Mammary epithelial cell (primary cell): ENCODE measurements at regions of chr9 and their contacts with region 1.

Region 1: GRCh38 chr9:86983260-86984255 is 36.3 kb upstream of the GAS1 start:
- DNase-seq: peak; percentile 98
- H3K4me3 ChIP-seq: no peak overlapping the region
- H3K27ac ChIP-seq: peak overlapping the region; percentile 95
- H3K4me1 ChIP-seq: peaks cover 47% of the 10 kb centered on the region
- H3K27me3 ChIP-seq: no peaks in the 10 kb centered on the region
- CTCF ChIP-seq: no peak

Region 2: DNA sequence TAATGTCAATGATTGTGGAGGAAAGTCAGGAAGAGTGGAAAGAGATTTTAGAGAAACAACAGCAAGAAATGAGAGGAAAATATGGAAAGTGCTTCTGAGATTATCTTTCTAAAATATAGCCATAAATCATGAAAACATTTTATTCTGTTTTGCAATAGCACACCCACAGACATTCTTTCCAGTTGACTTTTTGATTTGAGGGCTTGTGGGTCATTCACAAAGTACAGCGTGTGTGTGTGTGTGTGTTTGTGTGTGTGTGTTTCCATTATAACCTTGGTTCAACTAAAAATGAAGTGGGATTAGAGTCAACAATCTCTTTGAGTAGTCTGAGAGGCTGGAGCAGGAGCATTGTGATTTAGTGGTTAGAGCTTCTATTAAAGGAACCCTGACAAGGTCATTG is 80.3 kb after region 1 on chr9:
- CTCF ChIA-PET with region 1: no interaction called
- dilution Hi-C with region 1: no loop called
- in situ Hi-C with region 1: loop called in 1 of 2 experiments (anchors 10 kb)
- intact Hi-C with region 1: no loop called
- DNase-seq: peak; percentile 66
- H3K4me3 ChIP-seq: no peak overlapping the region
- H3K27ac ChIP-seq: peak overlapping the region; percentile 54
- H3K4me1 ChIP-seq: peaks cover 34% of the 10 kb centered on the region
- H3K27me3 ChIP-seq: no peaks in the 10 kb centered on the region
- CTCF ChIP-seq: no peak

Region 3: DNA sequence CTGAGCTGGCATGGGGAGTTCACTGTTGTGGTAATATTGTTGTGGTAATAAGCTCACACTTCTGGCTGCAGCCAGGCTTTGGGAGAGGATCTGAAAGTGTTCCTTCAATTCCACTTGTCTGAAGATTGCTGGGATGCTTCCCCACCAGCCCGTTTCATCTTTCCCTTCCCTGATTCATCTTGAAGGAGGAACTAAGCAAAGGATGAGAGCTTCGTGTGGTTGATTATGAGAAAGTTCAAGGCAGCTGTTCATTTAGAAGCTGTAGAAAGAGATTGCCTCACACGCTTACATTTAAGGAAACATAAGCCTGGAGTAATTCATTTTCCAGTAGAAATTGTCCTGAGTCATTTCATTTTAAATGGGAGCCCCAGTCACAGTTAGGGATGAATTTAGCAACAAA is 86.1 kb after region 1 on chr9:
- CTCF ChIA-PET with region 1: no interaction called
- dilution Hi-C with region 1: no loop called
- in situ Hi-C with region 1: loop called in 1 of 2 experiments (anchors 10 kb)
- intact Hi-C with region 1: loop called (anchors 2 kb)
- DNase-seq: no peak
- H3K4me3 ChIP-seq: no peak overlapping the region
- H3K27ac ChIP-seq: no peak overlapping the region
- H3K4me1 ChIP-seq: peaks cover 27% of the 10 kb centered on the region
- H3K27me3 ChIP-seq: no peaks in the 10 kb centered on the region
- CTCF ChIP-seq: no peak